Activated CD8-positive, alpha-beta T cell treated with anti-CD3 and anti-CD28 coated beads for 36 hours (primary cell): ENCODE measurements at regions of chr1 and their contacts with region 1.

Region 1: DNA sequence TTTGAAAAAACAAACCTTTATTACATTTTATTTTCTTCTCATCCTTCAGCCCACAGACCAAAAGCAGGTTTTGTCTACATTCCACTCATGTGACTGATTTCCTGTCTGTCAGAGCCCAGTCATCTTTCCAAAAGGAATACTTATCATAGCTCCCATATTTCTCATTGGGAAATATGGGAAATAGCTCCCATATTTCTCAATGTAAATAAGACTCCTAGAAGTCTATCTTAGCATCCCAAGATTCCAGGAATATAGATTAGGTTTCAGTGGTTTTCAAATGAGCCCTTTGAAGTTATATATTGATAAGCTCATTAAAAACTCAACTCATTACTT is 19.1 kb upstream of the NRDC start:
- DNase-seq: no peak
- ATAC-seq: no peak
- H3K4me3 Mint-ChIP-seq: no peak overlapping the region
- H3K27ac Mint-ChIP-seq: no peak overlapping the region
- H3K4me1 Mint-ChIP-seq: peaks cover 2% of the 10 kb centered on the region
- H3K27me3 Mint-ChIP-seq: peaks cover 37% of the 10 kb centered on the region
- CTCF ChIP-seq: no peak

Region 2: GRCh38 chr1:51736702-51737101 is 161.0 kb before region 1 on chr1:
- CTCF ChIA-PET with region 1: no interaction called
- POLR2A ChIA-PET with region 1: no interaction called
- intact Hi-C with region 1: no loop called
- DNase-seq: no peak
- ATAC-seq: no peak
- H3K4me3 Mint-ChIP-seq: no peak overlapping the region
- H3K27ac Mint-ChIP-seq: no peak overlapping the region
- H3K4me1 Mint-ChIP-seq: peaks cover 52% of the 10 kb centered on the region
- H3K27me3 Mint-ChIP-seq: no peaks in the 10 kb centered on the region
- CTCF ChIP-seq: no peak

Region 3: DNA sequence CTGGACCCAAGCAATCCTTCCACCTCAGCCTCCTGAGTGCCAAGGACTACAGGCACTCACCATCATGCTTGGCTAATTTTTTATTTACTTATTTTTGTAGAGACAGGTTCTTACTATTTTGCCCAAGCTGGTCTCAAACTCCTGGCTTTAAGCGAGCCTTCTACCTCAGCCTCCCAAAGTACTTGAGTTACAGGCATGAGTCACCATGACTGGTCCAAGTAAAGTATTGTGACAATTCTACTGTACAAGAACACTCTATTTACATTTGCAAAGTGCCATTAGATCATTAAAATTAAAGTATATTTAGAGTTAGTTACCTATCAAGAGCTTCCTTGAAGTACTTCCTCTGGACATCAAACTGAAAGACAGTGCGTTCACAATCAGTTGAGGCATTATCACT is 64.0 kb before region 1 on chr1:
- CTCF ChIA-PET with region 1: no interaction called
- POLR2A ChIA-PET with region 1: no interaction called
- intact Hi-C with region 1: no loop called
- DNase-seq: no peak
- ATAC-seq: no peak
- H3K4me3 Mint-ChIP-seq: no peak overlapping the region
- H3K27ac Mint-ChIP-seq: no peak overlapping the region
- H3K4me1 Mint-ChIP-seq: peaks cover 2% of the 10 kb centered on the region
- H3K27me3 Mint-ChIP-seq: no peaks in the 10 kb centered on the region
- CTCF ChIP-seq: no peak

Region 4: GRCh38 chr1:51878616-51879336 is 18.9 kb before region 1 on chr1 and contains the start of gene NRDC:
- CTCF ChIA-PET with region 1: interaction called, 13 read pairs
- POLR2A ChIA-PET with region 1: interaction called, 4 read pairs
- intact Hi-C with region 1: no loop called
- DNase-seq: peak; percentile 100
- ATAC-seq: peak; percentile 93
- H3K4me3 Mint-ChIP-seq: no peak within 1 kb of the TSS
- H3K27ac Mint-ChIP-seq: no peak within 1 kb of the TSS
- H3K4me1 Mint-ChIP-seq: peaks cover 33% of the 10 kb centered on the region
- H3K27me3 Mint-ChIP-seq: peaks cover 10% of the 10 kb centered on the region
- CTCF ChIP-seq: no peak
- total RNA-seq, gene NRDC: 119 to 124 TPM

Region 5: DNA sequence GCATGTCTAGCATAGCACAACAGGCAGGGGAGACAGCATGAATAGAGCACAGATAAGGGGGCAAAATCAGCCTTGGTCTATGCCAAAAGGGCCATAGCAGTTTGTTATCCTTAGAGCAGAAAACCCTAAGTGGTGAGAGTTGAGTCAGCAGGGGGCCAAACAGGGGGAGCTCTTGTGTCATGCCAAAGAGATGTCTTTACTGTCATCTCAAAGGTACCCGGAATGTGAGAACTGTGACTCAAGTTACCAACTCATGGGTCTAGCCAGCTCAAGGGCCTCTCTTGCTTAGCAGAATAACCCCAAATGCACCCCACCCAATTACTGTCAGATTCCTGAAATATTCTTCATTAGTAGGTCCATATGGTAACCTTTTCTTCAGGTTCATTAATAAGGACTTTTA is 26.8 kb after region 1 on chr1:
- CTCF ChIA-PET with region 1: interaction called, 13 read pairs
- POLR2A ChIA-PET with region 1: no interaction called
- intact Hi-C with region 1: no loop called
- DNase-seq: peak; percentile 66
- ATAC-seq: peak; percentile 79
- H3K4me3 Mint-ChIP-seq: no peak overlapping the region
- H3K27ac Mint-ChIP-seq: no peak overlapping the region
- H3K4me1 Mint-ChIP-seq: no peaks in the 10 kb centered on the region
- H3K27me3 Mint-ChIP-seq: peaks cover 8% of the 10 kb centered on the region
- CTCF ChIP-seq: no peak

Region 6: DNA sequence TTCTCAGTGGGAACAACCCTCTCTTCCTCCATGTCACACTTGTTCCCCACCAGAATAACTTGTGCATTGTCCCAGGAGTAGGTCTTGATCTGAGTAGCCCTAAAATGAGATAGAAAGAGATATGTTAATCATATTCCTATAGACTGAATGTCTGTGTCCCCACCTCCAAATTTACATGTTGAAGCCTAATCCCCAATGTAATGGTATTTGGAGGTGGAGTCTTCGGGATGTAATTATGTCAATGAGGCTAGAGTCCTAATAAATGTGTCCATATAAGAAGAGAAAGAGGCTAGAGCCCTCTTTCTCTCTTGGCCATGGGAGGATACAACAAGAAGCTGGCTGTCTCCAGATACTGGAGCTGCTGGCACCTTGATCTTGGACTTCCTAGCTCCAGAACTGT is 35.7 kb after region 1 on chr1:
- CTCF ChIA-PET with region 1: interaction called, 11 read pairs
- POLR2A ChIA-PET with region 1: no interaction called
- intact Hi-C with region 1: no loop called
- DNase-seq: no peak
- ATAC-seq: no peak
- H3K4me3 Mint-ChIP-seq: no peak overlapping the region
- H3K27ac Mint-ChIP-seq: no peak overlapping the region
- H3K4me1 Mint-ChIP-seq: no peaks in the 10 kb centered on the region
- H3K27me3 Mint-ChIP-seq: peaks cover 3% of the 10 kb centered on the region
- CTCF ChIP-seq: no peak

Region 7: DNA sequence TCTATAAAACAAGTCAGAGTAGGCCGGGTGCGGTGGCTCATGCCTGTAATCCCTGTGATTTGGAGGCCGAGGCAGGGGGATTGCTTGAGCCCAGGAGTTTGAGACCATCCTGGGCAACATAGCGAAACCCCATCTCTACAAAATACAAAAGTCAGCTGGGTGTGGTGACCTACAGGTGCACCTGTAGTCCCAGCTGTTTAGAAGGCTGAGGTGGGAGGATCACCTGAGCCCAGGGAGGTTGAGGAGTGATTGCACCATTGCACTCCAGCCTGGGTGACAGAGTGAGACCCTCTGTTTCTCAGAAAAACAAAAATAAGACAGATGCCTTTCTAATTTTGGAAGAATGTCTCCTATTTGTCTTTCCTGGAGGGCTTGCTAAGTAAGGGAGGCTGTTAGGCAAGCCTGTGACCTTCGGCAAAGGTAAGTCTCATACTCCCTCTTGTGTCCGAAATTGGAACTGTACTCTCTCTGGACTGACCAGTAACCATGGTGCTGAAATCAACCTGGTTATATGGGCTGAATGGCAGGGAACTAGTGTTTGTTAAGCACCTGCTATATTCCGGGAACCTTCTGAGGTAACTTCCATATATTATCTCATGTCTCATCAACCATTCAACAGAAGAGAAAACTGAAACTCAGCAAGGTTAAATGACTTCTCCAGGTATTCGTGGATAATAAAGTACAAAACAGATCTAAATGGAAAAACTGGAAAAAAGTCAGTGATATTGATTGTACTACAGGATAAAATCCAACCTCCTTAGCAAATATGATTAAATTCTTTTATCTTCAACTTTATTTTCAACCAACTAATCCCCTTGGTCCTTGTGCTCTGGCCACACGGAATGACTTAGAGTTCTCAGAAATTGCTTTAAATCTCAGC is 104.6 kb after region 1 on chr1:
- CTCF ChIA-PET with region 1: interaction called, 39 read pairs
- POLR2A ChIA-PET with region 1: no interaction called
- intact Hi-C with region 1: loop called (anchors 2 kb)
- DNase-seq: peak; percentile 59
- ATAC-seq: peak; percentile 97
- H3K4me3 Mint-ChIP-seq: no peak overlapping the region
- H3K27ac Mint-ChIP-seq: no peak overlapping the region
- H3K4me1 Mint-ChIP-seq: no peaks in the 10 kb centered on the region
- H3K27me3 Mint-ChIP-seq: peaks cover 14% of the 10 kb centered on the region
- CTCF ChIP-seq: peak; percentile 92